ENCODE measurements at regions of chr17 and their contacts with region 1.

Region 1: DNA sequence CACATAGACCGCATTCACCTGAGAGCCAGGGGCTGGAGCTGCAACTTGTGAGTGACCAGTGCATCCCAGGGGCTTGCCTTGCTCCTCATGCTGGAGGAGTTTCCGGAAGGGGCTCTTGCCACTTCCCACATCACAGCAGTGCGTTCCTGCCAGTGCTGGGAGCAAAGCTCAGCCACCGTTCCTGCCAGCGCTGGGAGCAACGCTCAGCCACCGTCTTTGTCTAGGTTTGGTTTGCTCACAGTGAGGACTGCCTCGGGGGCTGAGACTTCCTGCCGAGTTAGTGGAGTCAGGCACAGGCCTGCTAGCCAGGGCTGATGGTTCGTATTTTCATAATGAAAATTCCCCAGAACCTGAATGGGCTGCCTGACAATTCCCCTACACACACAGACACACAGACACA is 5.4 kb upstream of the CHRNE start:
- DNase-seq: peak; percentile 45
- H3K4me3 ChIP-seq: no peak overlapping the region
- H3K27ac ChIP-seq: peak overlapping the region in 1 of 2 experiments; percentile 1; a peak in 1 of 4 replicates
- H3K4me1 ChIP-seq: peaks cover 0 to 13% of the 10 kb centered on the region in 2 experiments; a peak in 1 of 4 replicates
- H3K27me3 ChIP-seq: no peaks in the 10 kb centered on the region
- CTCF ChIP-seq: no peak
- EP300 ChIP-seq: no peak
- RAD21 ChIP-seq: no peak

Region 2: GRCh38 chr17:4760613-4761012 is 147.7 kb before region 1 on chr17:
- CTCF ChIA-PET with region 1: no interaction called
- POLR2A ChIA-PET with region 1: no interaction called
- DNase-seq: no peak
- H3K4me3 ChIP-seq: no peak overlapping the region
- H3K27ac ChIP-seq: no peak overlapping the region
- H3K4me1 ChIP-seq: no peaks in the 10 kb centered on the region
- H3K27me3 ChIP-seq: peaks cover 44% of the 10 kb centered on the region; the same call in 1 of the 2 replicates
- CTCF ChIP-seq: no peak
- EP300 ChIP-seq: no peak
- RAD21 ChIP-seq: no peak

Region 3: DNA sequence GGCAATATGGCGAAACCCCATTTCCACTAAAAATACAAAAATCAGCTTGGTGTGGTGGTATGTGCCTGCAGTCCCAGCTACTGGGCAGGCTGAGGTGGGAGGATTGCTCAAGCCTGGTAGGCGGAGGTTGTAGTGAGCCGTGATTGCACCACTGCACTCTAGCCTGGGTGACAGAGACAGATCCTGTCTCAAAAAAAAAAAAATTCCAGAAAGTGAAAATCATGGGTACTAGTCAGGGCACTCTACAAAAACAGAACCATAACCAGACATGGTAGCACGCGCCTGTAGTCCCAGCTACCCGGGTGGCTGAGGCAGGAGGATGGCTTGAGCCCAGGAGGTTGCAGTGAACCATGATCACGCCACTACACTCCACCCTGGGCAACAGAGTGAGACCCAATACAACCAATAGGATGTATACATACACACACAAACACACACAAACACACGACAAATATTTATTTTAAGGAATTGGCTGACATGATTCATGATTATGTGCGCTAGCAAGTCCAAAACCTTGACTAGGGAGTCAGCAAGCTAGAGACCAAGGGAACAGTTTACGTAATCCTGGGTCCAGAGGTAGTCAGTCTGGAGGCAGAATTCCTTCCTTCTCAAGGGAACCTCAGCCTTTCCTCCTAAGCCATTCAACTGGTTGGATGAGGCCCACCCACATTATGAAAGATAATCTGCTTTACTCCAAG is 12.2 kb after region 1 on chr17:
- CTCF ChIA-PET with region 1: interaction called, 12 read pairs
- POLR2A ChIA-PET with region 1: interaction called, 3 read pairs
- DNase-seq: no peak
- H3K4me3 ChIP-seq: no peak overlapping the region
- H3K27ac ChIP-seq: no peak overlapping the region
- H3K4me1 ChIP-seq: no peaks in the 10 kb centered on the region; a peak in 1 of 4 replicates
- H3K27me3 ChIP-seq: no peaks in the 10 kb centered on the region
- CTCF ChIP-seq: no peak
- EP300 ChIP-seq: no peak
- RAD21 ChIP-seq: no peak

Region 4: GRCh38 chr17:4939796-4940624 is 31.7 kb after region 1 on chr17 and contains the starts of genes RNF167 and SLC25A11:
- CTCF ChIA-PET with region 1: interaction called, 29 read pairs
- POLR2A ChIA-PET with region 1: interaction called, 18 read pairs
- DNase-seq: peak; percentile 98
- H3K4me3 ChIP-seq: peak within 1 kb of the TSS; percentile 80 to 86
- H3K27ac ChIP-seq: peak within 1 kb of the TSS; percentile 94 to 98
- H3K4me1 ChIP-seq: peaks cover 16 to 27% of the 10 kb centered on the region in 2 experiments; a peak in 3 of 4 replicates
- H3K27me3 ChIP-seq: no peaks in the 10 kb centered on the region
- CTCF ChIP-seq: no peak
- EP300 ChIP-seq: no peak
- RAD21 ChIP-seq: no peak
- polyA plus RNA-seq, gene RNF167: 96.5 and 115 TPM in 2 replicates
- polyA plus RNA-seq, gene SLC25A11: 58.5 and 82.8 TPM in 2 replicates

Region 5: DNA sequence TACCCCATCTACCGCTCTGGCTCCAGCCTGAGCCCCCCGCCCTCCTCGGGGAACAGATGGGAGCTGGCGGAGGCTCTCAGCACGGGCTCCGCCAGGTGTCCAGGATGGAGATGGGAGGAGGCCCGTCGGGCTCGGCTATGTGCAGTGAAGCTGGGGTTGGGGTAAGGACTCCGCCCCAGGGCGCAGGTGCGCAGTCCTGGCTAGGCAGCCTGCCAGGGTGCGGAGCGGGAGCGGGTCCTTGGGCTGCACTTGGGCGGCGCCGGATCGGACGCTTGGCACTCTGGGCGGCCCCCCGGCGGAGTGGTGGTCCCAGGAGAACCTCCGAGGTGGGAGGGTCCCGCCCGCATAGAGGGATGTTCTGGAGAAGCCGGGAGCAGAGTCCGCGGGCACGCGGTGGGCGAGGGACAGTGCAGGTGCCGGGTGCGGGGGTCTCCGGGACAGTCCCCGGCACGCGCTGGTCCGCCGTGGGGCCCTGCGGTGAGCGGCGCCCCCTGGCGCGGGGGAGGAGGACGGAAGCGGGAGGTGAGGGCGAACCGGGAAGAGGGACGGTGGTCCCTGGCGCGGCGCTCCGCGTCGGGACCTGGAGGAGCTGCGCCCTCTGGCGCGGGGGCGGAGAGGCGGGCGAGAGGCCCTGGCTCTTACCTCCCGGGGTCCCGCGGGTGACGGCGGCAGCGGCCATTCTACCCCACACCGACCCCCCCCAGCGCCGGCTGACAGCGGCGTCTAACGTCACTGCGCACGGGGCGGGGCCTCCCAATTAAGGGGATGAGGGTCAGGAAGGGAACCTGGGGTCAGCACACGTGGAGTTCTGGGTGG is 78.9 kb after region 1 on chr17 and contains the start of gene CAMTA2:
- CTCF ChIA-PET with region 1: interaction called, 10 read pairs
- POLR2A ChIA-PET with region 1: no interaction called
- DNase-seq: peak; percentile 94
- H3K4me3 ChIP-seq: peak within 1 kb of the TSS; percentile 83 to 96
- H3K27ac ChIP-seq: peak within 1 kb of the TSS; percentile 41 to 74; a peak in 2 of 4 replicates
- H3K4me1 ChIP-seq: peaks cover 7 to 18% of the 10 kb centered on the region in 2 experiments; a peak in 2 of 4 replicates
- H3K27me3 ChIP-seq: no peaks in the 10 kb centered on the region
- CTCF ChIP-seq: peak; percentile 80
- EP300 ChIP-seq: no peak
- RAD21 ChIP-seq: peak; percentile 30
- polyA plus RNA-seq, gene CAMTA2: 18.4 and 27.0 TPM in 2 replicates